CD14-positive monocyte (primary cell): ENCODE measurements at regions of chrX and their contacts with region 1.

Region 1: GRCh38 chrX:102950908-102951866 is 14.1 kb downstream of the RAB40AL start:
- DNase-seq: peak; percentile 15 to 35 (median 24)
- H3K4me3 ChIP-seq: peak overlapping the region in 2 of 3 experiments; percentile 40 to 41
- H3K4me3 Mint-ChIP-seq: peak overlapping the region; percentile 56 to 92
- H3K27ac ChIP-seq: no peak overlapping the region
- H3K27ac Mint-ChIP-seq: peak overlapping the region in 2 of 7 donors; percentile 29 to 52
- H3K4me1 ChIP-seq: peaks cover 0 to 4% of the 10 kb centered on the region in 2 donors
- H3K4me1 Mint-ChIP-seq: peaks cover 6% of the 10 kb centered on the region
- H3K27me3 ChIP-seq: no peaks in the 10 kb centered on the region
- H3K27me3 Mint-ChIP-seq: peaks cover 0 to 3% (median 2%) of the 10 kb centered on the region in 3 donors
- CTCF ChIP-seq: peak; percentile 67

Region 2: GRCh38 chrX:103157496-103158320 is 206.5 kb after region 1 on chrX:
- intact Hi-C with region 1: loop called in 1 of 2 experiments (anchors 5 kb)
- DNase-seq: peak in 2 of 3 donors; percentile 7 to 14
- H3K4me3 ChIP-seq: no peak overlapping the region
- H3K4me3 Mint-ChIP-seq: peak overlapping the region in 1 of 2 donors; percentile 67
- H3K27ac ChIP-seq: no peak overlapping the region
- H3K27ac Mint-ChIP-seq: no peak overlapping the region
- H3K4me1 ChIP-seq: peaks cover under 1 to 2% of the 10 kb centered on the region in 2 donors
- H3K4me1 Mint-ChIP-seq: peaks cover 11% of the 10 kb centered on the region
- H3K27me3 ChIP-seq: no peaks in the 10 kb centered on the region
- H3K27me3 Mint-ChIP-seq: peaks cover 0 to 6% (median 4%) of the 10 kb centered on the region in 3 donors
- CTCF ChIP-seq: peak; percentile 66

Region 3: DNA sequence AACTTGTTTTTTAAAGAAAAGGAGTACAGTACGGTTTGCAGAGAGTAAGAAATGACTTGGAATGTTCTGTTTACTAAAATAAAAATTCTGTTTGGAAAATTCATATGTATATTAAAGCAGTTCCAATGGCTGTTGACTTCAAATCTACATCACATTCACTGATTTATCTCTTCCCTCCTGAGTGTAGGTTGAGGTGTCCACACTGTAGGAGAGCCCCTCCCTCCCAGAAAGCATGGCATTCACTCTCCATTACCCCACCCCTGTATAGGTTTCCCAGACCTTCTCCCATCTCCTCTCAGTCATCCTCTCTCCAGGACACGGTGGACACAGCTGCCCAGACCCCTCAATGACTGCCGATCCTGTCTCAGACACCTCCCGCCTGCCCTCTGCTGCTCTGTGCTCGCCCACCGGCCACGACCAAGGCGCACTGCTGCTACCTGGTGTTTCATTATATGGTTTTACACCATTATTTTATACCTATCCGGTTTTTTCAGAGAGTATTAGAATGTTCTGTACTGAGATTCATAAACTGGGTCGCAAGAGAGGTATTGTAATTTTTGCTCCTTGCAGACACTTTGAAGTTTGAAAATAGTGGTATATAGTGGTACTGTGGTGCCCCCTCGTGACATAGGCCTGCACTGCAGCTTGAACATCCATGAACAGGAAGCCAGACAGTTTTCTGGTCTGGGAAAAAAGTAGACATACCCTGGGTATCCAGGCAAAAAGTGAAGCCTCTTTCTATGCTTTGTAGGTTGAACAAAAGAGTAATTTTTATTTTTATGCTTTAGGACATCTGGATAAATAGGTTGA is 225.0 kb after region 1 on chrX:
- intact Hi-C with region 1: loop called in 1 of 2 experiments (anchors 5 kb)
- DNase-seq: peak; percentile 12 to 31 (median 25)
- H3K4me3 ChIP-seq: no peak overlapping the region
- H3K4me3 Mint-ChIP-seq: peak overlapping the region in 1 of 2 donors; percentile 71
- H3K27ac ChIP-seq: no peak overlapping the region
- H3K27ac Mint-ChIP-seq: no peak overlapping the region
- H3K4me1 ChIP-seq: no peaks in the 10 kb centered on the region
- H3K4me1 Mint-ChIP-seq: peaks cover 4% of the 10 kb centered on the region
- H3K27me3 ChIP-seq: peaks cover 0 to 2% of the 10 kb centered on the region in 2 donors
- H3K27me3 Mint-ChIP-seq: peaks cover 0 to 12% (median 2%) of the 10 kb centered on the region in 3 donors
- CTCF ChIP-seq: peak; percentile 65